ENCODE measurements at regions of chr11 and their contacts with region 1.

Region 1: GRCh38 chr11:46278387-46279125 is 1.1 kb downstream of the CREB3L1 start:
- DNase-seq: no peak
- H3K4me3 ChIP-seq: peak overlapping the region; percentile 95
- CTCF ChIP-seq: peak; percentile 90

Region 2: GRCh38 chr11:46039990-46040389 is 238.6 kb before region 1 on chr11:
- CTCF ChIA-PET with region 1: no interaction called
- POLR2A ChIA-PET with region 1: no interaction called
- DNase-seq: peak; percentile 31
- H3K4me3 ChIP-seq: no peak overlapping the region
- CTCF ChIP-seq: no peak

Region 3: GRCh38 chr11:46247664-46248063 is 30.9 kb before region 1 on chr11:
- CTCF ChIA-PET with region 1: interaction called, 52 read pairs
- POLR2A ChIA-PET with region 1: interaction called, 31 read pairs
- DNase-seq: no peak
- H3K4me3 ChIP-seq: no peak overlapping the region
- CTCF ChIP-seq: peak; percentile 5

Region 4: GRCh38 chr11:46265764-46266163 is 12.8 kb before region 1 on chr11:
- CTCF ChIA-PET with region 1: interaction called, 15 read pairs
- POLR2A ChIA-PET with region 1: no interaction called
- DNase-seq: no peak
- H3K4me3 ChIP-seq: no peak overlapping the region
- CTCF ChIP-seq: no peak

Measured in AG04449 (cell line).